Activated CD4-positive, alpha-beta memory T cell treated with anti-CD3 and anti-CD28 coated beads for 36 hours (primary cell): ENCODE measurements at regions of chr15 and their contacts with region 1.

Region 1: DNA sequence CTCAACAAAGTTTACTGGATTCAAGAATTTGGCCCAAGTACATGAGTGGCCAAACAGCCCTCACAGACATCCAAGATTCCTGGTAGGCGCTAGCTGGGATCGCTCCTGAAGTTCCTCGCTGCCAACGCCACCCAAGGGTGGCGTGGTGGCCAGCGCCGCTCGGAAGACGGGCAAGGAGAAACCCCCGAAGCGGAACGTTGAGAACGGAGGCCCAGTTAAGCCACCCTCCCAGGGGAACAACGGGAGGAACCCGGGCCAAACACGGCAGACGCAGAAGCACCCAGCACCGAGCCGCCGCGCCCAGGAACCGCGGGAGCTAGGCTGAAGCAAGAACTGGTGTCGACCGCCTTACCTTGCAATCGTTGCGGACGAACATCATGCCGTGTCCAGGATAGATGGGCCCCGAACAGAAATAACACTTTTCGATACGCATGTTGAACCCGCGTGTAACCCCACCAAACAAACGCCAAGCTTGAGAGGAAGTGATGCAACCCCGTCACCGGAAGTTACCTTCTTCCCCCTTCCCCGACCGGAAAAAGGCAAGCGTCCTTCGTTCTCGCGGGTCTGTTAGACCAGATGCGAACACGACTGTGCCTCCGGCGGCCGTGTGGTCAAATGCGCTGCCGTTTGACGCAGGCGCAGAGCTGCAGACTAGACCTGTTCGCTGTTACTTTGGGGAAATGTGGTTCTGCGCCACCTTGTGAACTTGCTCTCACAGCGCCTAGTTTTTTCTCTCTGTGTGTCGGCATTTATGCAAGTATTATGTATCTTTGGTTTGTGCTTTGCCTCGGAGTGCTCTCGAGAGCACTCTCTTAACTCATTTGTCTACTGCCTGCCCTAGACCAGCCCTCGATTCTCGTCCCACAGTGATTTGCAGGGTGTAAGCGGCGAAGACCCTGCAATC is at the start of gene RSL24D1:
- DNase-seq: peak; percentile 98
- H3K4me3 Mint-ChIP-seq: no peak within 1 kb of the TSS
- H3K27ac Mint-ChIP-seq: no peak within 1 kb of the TSS
- H3K4me1 Mint-ChIP-seq: peaks cover 22% of the 10 kb centered on the region
- H3K27me3 Mint-ChIP-seq: no peaks in the 10 kb centered on the region
- total RNA-seq, gene RSL24D1: 157 to 163 TPM

Region 2: GRCh38 chr15:55318588-55319494 is 122.1 kb after region 1 on chr15 and contains the starts of genes PIGB and PIGBOS1:
- CTCF ChIA-PET with region 1: interaction called, 13 read pairs
- POLR2A ChIA-PET with region 1: interaction called, 11 read pairs
- intact Hi-C with region 1: loop called (anchors 1 kb)
- DNase-seq: peak; percentile 87
- H3K4me3 Mint-ChIP-seq: peak within 1 kb of the TSS; percentile 97
- H3K27ac Mint-ChIP-seq: peak within 1 kb of the TSS; percentile 98
- H3K4me1 Mint-ChIP-seq: peaks cover 48% of the 10 kb centered on the region
- H3K27me3 Mint-ChIP-seq: no peaks in the 10 kb centered on the region
- total RNA-seq, gene PIGB: 18.0 to 18.9 TPM
- total RNA-seq, gene PIGBOS1: 10.5 to 11.1 TPM

Region 3: GRCh38 chr15:55344206-55344605 is 147.5 kb after region 1 on chr15:
- CTCF ChIA-PET with region 1: no interaction called
- POLR2A ChIA-PET with region 1: no interaction called
- intact Hi-C with region 1: no loop called
- DNase-seq: no peak
- H3K4me3 Mint-ChIP-seq: no peak overlapping the region
- H3K27ac Mint-ChIP-seq: no peak overlapping the region
- H3K4me1 Mint-ChIP-seq: no peaks in the 10 kb centered on the region
- H3K27me3 Mint-ChIP-seq: no peaks in the 10 kb centered on the region

Region 4: GRCh38 chr15:55928955-55929354 is 732.2 kb after region 1 on chr15:
- CTCF ChIA-PET with region 1: no interaction called
- POLR2A ChIA-PET with region 1: no interaction called
- intact Hi-C with region 1: no loop called
- DNase-seq: no peak
- H3K4me3 Mint-ChIP-seq: no peak overlapping the region
- H3K27ac Mint-ChIP-seq: no peak overlapping the region
- H3K4me1 Mint-ChIP-seq: no peaks in the 10 kb centered on the region
- H3K27me3 Mint-ChIP-seq: no peaks in the 10 kb centered on the region